Activated CD8-positive, alpha-beta T cell treated with anti-CD3 and anti-CD28 coated beads, Interleukin-2, amount 10 ng/mL, durations not matched to agents 7 days and 5 days (primary cell): ENCODE measurements at regions of chr11 and their contacts with region 1.

Region 1: GRCh38 chr11:33161120-33162005 is at the start of gene CSTF3:
- DNase-seq: peak; percentile 97
- ATAC-seq: peak; percentile 96
- H3K4me3 Mint-ChIP-seq: peak within 1 kb of the TSS; percentile 98
- H3K27ac Mint-ChIP-seq: peak within 1 kb of the TSS; percentile 98
- H3K4me1 Mint-ChIP-seq: peaks cover 37% of the 10 kb centered on the region
- H3K27me3 Mint-ChIP-seq: no peaks in the 10 kb centered on the region
- total RNA-seq, gene CSTF3: 26.5 to 27.2 TPM

Region 2: DNA sequence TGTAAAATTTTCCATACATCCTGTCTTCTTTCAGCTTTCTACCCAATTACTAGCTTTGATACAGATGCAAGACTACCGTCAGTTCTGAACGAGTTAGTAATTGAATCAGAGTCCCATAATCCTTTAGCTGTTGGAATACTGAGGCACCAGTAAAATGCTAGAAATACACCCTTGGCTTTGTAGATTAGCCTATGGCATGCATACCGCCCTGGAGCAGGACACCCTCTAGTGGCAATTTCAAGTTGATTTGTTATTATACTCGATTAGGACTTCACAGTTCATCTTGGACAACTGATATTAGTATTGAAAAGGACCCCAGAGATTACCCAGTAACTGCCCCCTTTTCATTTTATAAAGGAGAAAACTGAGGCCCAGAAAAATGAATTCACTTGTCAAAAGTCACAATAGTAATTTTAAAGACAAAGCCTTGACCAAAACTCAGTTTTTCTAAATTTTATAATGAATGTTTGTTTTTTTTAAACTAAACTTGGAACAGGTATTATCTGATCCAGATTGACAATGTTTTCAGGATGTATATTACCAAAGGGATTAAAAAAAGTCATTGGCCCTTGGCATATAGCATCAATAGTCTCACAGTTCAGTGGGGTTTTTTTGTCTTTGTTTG is 168.5 kb after region 1 on chr11:
- CTCF ChIA-PET with region 1: interaction called, 13 read pairs
- POLR2A ChIA-PET with region 1: no interaction called
- DNase-seq: peak; percentile 61
- ATAC-seq: peak; percentile 67
- H3K4me3 Mint-ChIP-seq: no peak overlapping the region
- H3K27ac Mint-ChIP-seq: no peak overlapping the region
- H3K4me1 Mint-ChIP-seq: no peaks in the 10 kb centered on the region
- H3K27me3 Mint-ChIP-seq: no peaks in the 10 kb centered on the region

Region 3: DNA sequence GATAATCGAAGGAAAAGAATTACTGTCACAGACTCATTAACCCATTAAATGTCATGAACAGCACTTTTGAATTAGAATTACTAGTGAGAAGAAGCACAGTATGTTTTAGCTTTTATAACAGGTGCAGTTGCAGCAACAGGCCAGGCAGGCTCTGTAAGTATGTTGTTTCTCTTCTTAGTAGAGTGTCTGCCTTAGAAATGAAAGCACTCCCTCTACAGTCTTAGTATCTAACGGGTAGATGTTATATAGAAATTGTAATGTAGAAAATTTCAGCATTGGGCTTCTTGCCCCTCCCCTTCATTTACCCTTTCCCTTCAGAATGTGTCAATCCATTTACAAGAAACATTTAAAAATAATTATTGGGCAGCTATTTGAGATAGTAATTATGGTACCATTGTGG is 183.2 kb after region 1 on chr11:
- CTCF ChIA-PET with region 1: interaction called, 11 read pairs
- POLR2A ChIA-PET with region 1: interaction called, 5 read pairs
- DNase-seq: no peak
- ATAC-seq: no peak
- H3K4me3 Mint-ChIP-seq: no peak overlapping the region
- H3K27ac Mint-ChIP-seq: no peak overlapping the region
- H3K4me1 Mint-ChIP-seq: no peaks in the 10 kb centered on the region
- H3K27me3 Mint-ChIP-seq: no peaks in the 10 kb centered on the region